AG04450 (cell line): ENCODE measurements at regions of chr5 and their contacts with region 1.

Region 1: DNA sequence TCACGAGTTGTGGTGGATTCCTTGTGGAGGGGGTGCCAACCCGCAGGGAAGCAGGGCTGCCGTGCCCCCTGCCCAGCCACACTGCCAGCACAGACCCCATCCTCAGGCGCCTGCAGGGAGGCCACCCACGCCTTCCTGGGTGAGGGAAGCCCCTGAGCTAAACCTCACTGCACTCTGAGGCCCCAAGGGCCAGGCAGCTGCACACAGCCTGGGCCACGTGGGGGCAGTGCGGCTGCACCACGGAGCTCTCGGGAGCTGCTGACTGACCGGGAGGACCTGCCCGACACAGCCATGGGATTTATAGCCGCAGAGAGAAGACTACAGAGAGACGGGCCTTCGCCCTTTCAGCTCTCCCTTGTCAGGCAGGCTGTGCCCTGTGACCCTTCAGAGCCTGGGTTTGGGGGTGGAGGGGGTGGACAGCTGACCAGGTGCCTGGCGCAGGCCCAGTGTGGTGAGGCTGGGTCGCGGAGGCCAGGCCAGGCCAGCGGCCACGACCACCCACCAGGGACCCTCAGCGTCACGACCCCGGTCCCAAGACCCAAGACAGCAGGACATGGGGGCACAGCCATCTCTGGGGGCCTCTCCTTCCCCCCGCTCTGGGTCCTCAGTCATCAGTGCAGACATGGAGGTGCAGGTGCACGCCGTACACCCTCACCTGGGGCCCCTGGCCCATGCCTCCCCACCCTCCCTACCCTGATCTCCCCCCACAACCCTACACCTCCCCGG is 4.3 kb upstream of the AHRR start:
- DNase-seq: peak; percentile 52
- H3K4me3 ChIP-seq: no peak overlapping the region
- H3K27ac ChIP-seq: no peak overlapping the region
- H3K27me3 ChIP-seq: no peaks in the 10 kb centered on the region
- CTCF ChIP-seq: peak; percentile 84

Region 2: DNA sequence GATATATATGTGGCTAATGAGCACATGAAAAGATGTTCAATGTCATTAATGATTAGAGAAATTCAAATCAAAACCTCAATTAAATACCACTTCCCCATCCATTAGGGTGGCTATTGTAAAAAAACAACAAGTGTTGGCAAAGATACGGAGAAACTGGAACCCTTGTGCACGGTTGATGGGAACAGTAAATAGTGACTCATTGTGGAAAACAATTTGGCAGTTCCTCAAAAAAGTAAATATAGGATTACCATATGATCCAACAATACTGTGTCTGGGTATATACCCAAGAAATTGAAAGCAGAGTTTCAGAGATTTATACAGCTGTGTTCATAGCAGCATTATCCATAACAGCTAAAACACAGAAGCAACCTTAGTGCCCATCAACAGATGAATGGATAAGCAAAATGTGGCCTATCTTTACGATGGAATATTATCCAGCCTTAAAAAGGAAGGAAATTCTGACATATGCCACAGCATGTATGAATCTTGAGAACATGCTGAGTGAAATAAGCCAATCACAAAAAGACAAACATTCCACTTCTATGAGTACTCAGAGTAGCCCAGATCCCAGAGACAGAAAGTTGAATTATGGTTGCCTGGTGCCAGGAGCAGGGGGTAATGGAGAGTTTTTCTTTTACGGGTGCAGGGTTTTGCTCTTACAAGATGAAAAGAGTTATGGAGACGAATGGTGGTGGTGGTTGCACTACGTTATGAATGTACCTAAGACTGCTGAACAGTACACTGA is 167.3 kb before region 1 on chr5:
- CTCF ChIA-PET with region 1: no interaction called
- POLR2A ChIA-PET with region 1: no interaction called
- DNase-seq: no peak
- H3K4me3 ChIP-seq: no peak overlapping the region
- H3K27ac ChIP-seq: no peak overlapping the region
- H3K27me3 ChIP-seq: peaks cover under 1% of the 10 kb centered on the region
- CTCF ChIP-seq: no peak

Region 3: GRCh38 chr5:368183-369084 is 51.2 kb after region 1 on chr5:
- CTCF ChIA-PET with region 1: interaction called, 3 read pairs
- POLR2A ChIA-PET with region 1: interaction called, 10 read pairs
- DNase-seq: peak; percentile 89
- H3K4me3 ChIP-seq: no peak overlapping the region
- H3K27ac ChIP-seq: peak overlapping the region; percentile 94
- H3K27me3 ChIP-seq: no peaks in the 10 kb centered on the region
- CTCF ChIP-seq: no peak

Region 4: DNA sequence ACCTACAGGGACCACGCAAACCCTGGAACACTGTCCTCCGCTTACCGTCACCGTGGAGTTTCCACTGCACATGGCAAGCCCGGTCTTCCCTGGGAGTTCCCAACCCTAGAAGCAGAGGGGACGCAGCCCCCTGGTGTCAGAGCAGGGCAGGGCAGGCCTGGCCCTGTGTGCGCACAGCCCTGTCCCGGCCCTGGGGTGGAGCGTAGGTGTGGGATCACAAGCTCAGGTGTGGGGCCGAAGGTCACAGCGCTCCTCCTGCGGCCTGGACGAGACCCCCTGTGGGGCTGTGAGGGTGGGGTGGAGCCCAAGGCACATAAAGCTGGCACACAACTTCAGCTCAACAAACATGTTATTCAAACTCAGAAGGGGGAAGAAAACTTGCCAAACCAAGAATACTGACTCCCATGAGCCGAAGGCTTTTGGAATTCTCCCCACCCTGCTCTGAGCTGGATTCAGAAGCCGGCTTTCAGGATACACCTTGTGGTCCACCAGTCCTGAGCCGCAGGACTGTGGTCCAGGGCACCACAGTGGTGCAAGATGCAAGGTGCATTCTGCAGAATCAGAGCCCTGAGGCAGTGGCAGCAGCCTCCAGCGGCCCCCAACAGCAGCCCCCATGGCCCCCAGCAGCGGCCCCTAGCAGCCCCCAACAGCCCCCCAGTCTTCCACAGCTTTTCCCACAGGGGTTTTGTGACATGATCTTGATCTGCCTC is 113.9 kb after region 1 on chr5:
- CTCF ChIA-PET with region 1: interaction called, 31 read pairs
- POLR2A ChIA-PET with region 1: interaction called, 3 read pairs
- DNase-seq: no peak
- H3K4me3 ChIP-seq: no peak overlapping the region
- H3K27ac ChIP-seq: no peak overlapping the region
- H3K27me3 ChIP-seq: no peaks in the 10 kb centered on the region
- CTCF ChIP-seq: peak; percentile 76

Region 5: DNA sequence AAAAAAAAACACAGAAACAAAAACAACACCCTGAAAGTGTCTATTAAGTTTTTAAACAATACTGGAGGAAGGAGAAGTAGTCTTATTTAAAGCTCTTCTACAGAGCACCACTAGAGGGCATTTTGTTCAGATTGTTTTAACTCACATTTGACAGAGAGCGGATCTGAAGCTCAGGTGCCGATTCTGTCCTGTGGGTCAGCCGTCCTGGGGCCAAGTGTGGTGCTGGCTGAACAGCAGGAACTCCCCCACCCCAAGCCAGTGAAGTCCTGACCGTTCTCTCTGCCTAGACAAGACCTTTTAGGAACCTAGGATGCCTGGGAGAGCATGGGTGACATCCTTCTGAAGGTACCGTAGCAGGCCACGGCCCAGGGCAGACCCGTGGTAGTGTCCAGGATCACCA is 129.6 kb after region 1 on chr5:
- CTCF ChIA-PET with region 1: interaction called, 38 read pairs
- POLR2A ChIA-PET with region 1: interaction called, 4 read pairs
- DNase-seq: peak; percentile 8
- H3K4me3 ChIP-seq: no peak overlapping the region
- H3K27ac ChIP-seq: no peak overlapping the region
- H3K27me3 ChIP-seq: no peaks in the 10 kb centered on the region
- CTCF ChIP-seq: peak; percentile 68